Prostate gland (tissue), 2 donors: ENCODE measurements at regions of chr17 and their contacts with region 1.

Region 1: GRCh38 chr17:4625181-4625617 is 16.3 kb downstream of the ALOX15 start:
- DNase-seq: no peak
- H3K4me3 ChIP-seq: no peak overlapping the region
- H3K27ac ChIP-seq: no peak overlapping the region
- H3K4me1 ChIP-seq: no peaks in the 10 kb centered on the region
- H3K27me3 ChIP-seq: no peaks in the 10 kb centered on the region
- CTCF ChIP-seq: no peak
- POLR2A ChIP-seq: no peak

Region 2: DNA sequence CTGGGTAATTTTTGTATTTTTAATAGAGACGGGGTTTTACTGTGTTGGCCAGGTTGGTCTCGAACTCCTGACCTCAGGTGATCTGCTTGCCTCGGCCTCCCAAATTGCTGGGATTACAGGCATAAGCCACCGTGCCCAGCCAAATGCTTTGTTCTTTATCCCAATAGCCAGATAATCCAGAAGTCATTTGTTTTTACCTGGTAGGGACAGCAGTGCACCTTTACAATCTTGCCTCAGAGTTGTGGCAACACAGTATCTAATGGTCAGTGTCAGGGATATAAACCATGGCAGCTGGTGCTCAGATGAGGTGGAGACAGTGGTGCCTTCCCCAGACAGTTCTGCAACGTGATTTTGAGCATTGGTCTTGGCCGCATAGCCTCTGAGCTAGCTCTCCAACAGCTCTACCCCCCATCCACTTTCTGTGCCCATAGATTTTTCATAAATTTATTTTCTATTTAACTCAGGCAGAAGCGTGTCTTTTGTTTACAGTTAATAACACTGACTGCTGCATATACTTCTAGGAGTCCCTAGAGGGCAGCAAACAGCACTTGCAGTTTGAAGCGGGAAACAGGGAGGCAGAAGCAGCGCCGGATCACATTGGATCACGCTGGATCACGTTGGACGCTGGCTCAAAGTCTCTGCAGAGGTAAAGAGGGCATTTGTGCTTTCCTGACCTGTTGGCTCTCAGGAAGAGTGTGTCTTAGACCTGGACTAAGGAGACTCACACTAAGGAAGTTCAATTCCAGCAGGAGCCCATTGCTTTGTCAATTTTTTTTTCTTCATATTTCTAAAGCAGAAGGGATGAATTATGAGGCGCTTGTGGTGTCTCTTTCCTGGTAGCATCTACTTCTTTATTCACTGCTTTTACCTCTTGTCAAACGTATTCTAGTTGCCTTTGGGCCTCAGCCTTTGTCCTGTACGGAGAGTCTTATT is 59.7 kb before region 1 on chr17:
- intact Hi-C with region 1: loop called (anchors 1 kb)
- DNase-seq: peak; percentile 51
- H3K4me3 ChIP-seq: no peak overlapping the region
- H3K27ac ChIP-seq: no peak overlapping the region
- H3K4me1 ChIP-seq: no peaks in the 10 kb centered on the region
- H3K27me3 ChIP-seq: no peaks in the 10 kb centered on the region
- CTCF ChIP-seq: peak; percentile 38 to 76 (median 52)
- POLR2A ChIP-seq: no peak

Region 3: DNA sequence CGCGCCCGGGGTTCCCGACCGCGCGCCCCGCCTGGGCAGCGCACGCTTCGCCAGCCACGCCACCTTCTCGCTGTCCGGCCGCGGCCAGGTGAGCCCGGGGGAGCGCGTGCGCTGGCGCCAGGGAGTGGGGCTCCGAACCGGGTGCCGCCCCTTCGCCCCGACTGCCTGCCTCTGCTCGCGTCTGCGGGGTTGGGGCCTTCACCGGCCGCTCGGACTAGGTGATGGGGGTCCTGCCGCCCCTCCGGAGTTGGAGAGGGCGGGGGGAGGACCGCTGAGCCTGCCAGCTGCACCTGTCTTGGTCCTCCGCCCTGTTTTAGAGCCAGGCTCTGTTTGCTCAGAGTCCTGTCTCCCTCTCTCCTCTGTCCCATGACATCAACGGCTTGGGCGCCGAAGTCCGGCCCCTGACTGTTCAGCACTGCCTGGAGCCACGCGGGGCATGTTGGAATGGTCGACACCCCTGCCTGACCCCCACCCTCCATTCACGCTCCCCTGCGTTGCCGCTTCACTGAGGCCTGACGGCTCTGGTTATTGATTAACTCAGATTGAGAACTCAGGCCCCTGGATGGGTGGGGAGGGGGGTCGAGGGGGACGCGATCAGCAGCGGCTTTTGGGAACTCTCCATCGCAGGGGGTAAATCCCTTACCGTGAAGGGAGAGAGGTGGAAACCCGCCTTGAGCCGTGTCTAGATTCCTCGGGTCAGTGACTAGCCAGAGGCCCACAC is 40.1 kb before region 1 on chr17:
- intact Hi-C with region 1: loop called (anchors 5 kb)
- DNase-seq: no peak
- H3K4me3 ChIP-seq: peak overlapping the region; percentile 33 to 43
- H3K27ac ChIP-seq: no peak overlapping the region
- H3K4me1 ChIP-seq: no peaks in the 10 kb centered on the region
- H3K27me3 ChIP-seq: peaks cover 5% of the 10 kb centered on the region
- CTCF ChIP-seq: no peak
- POLR2A ChIP-seq: no peak

Region 4: GRCh38 chr17:4709794-4710692 is 84.8 kb after region 1 on chr17 and contains the start of gene ARRB2:
- intact Hi-C with region 1: no loop called
- DNase-seq: peak; percentile 97
- H3K4me3 ChIP-seq: peak within 1 kb of the TSS; percentile 65 to 66
- H3K27ac ChIP-seq: peak within 1 kb of the TSS; percentile 87
- H3K4me1 ChIP-seq: peaks cover 5% of the 10 kb centered on the region
- H3K27me3 ChIP-seq: no peaks in the 10 kb centered on the region
- CTCF ChIP-seq: peak; percentile 26 to 90 (median 72)
- POLR2A ChIP-seq: peak; percentile 67
- total RNA-seq, gene ARRB2: 12.5 to 30.1 TPM